Cardiac septum (tissue), 1 donor: ENCODE measurements at regions of chr1 and their contacts with region 1.

Region 1: GRCh38 chr1:70221241-70222121 is at the start of gene SRSF11:
- DNase-seq: peak; percentile 98
- total RNA-seq, gene SRSF11: 64.8 TPM

Region 2: GRCh38 chr1:70205434-70206118 is 15.9 kb before region 1 on chr1 and contains the start of gene LRRC40:
- intact Hi-C with region 1: loop called (anchors 1 kb)
- DNase-seq: peak; percentile 99
- total RNA-seq, gene LRRC40: 10.6 TPM

Region 3: DNA sequence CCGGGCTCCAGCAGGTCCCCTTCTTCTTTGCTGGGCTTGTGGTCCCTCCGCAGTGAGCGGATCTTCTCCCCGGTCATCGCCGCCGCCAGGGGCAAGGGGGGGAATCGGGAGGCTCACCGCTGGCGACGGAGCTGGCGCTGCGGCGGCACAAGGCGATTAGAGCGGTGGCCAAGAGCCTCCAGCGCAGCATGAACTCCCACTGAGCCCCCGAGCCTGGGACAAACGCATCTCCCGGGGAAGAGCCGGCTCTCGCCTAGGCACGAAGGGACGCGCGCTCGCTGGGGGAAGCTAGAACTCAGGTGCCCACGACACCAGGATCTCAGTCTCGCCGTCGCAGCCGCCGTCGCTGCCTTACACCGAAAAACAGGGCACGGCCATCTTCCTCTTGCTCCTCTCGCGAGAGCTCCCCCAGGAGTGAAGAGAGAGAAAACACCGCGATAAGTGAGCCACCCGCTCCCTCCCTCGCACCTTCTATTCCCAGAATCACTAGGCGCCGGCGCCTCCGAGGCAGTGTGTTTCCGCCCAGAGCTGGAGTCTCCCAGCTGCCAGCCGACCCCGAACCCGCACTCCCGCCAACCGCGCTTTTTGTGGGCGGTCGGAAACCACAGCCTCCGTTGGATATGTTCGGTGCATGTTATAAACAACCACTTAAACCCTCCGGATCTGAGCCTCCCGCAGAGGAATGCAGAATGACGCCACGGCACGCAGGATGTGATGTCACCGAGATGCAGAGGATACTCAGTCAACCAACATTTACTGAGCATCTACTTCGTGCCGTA is 133.0 kb after region 1 on chr1 and contains the start of gene ANKRD13C:
- intact Hi-C with region 1: loop called (anchors 10 kb)
- DNase-seq: peak; percentile 95
- total RNA-seq, gene ANKRD13C: 11.8 TPM

Region 4: DNA sequence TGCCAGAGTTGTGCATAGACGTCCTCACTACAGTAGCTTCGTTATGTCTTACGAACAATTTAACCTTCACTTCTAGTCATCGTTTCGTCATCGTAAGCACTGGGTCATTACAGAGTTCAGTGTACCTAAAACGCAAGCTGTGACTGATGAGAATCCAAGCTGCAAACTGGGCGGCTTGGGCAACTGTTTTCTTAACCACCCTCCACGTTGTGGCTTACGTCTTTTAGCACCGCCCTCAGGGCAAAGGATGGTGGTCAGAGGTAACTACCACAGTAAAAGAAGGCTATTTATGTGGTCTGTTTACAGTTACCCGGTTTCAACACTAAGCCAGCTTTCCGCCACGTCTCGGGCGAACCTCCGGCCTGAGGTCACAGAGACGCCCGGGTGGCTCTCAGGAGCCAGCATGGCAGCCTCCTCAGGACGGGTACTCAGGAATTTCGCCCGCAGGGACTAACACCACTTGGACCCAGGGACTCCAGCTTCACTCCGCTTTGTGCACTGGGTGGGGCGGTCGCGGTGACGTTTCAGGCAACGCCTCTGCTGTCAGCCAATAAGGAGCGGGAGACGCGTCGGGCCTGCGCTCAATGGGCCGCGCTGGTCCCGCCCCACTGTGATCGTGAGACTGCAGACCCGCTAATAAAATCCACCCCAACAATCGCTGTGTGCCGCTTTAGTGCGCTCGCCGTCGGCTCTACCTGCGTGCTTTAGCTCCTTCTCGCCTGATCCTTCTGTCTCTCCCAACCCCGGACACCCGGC is 189.3 kb after region 1 on chr1 and contains the start of gene CTH:
- intact Hi-C with region 1: loop called (anchors 5 kb)
- DNase-seq: peak; percentile 98
- total RNA-seq, gene CTH: 0.43 TPM